ENCODE measurements at regions of chr12 and their contacts with region 1.

Region 1: DNA sequence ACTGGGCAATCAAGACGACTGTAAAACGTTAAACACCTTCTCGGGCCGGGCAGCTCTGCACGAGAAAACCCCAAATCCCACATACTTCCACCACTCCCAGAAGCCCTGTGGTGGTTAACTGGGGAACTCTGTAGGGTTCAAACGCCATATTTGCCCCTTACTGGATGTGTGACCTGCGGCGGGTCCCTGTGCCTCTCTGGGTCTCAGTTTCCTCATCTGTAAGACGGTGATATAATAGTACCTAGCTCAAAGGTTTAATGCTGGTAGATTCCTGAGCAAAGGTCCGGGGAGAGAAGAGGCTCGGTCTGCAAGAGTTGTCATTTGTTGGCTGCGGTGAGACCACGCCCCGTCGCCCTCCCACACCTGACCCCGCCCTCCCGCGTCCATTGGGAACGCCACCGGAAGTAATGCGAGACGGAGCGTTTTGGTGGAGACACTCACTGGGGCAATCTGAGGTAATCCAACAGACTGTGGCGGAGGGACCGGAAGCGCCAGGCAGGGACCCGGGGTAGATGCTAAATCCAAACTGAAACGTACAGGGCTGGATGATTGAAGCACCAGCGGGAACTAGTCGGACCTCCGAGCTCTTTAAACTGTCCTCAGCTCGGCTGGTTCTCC is 661 bp upstream of the OGFOD2 start:
- DNase-seq: peak; percentile 98
- H3K4me3 ChIP-seq: peak overlapping the region; percentile 91
- H3K27ac ChIP-seq: peak overlapping the region; percentile 99
- H3K4me1 ChIP-seq: peaks cover 10% of the 10 kb centered on the region
- H3K27me3 ChIP-seq: no peaks in the 10 kb centered on the region
- CTCF ChIP-seq: no peak

Region 2: GRCh38 chr12:123270214-123271000 is 296.0 kb after region 1 on chr12:
- CTCF ChIA-PET with region 1: interaction called, 10 read pairs
- POLR2A ChIA-PET with region 1: no interaction called
- intact Hi-C with region 1: no loop called
- DNase-seq: peak; percentile 33
- H3K4me3 ChIP-seq: peak overlapping the region; percentile 73
- H3K27ac ChIP-seq: peak overlapping the region; percentile 71
- H3K4me1 ChIP-seq: peaks cover 16% of the 10 kb centered on the region
- H3K27me3 ChIP-seq: no peaks in the 10 kb centered on the region
- CTCF ChIP-seq: no peak

Measured in A673 (cell line).